Aorta (tissue), 5 donors: ENCODE measurements at regions of chr2 and their contacts with region 1.

Region 1: GRCh38 chr2:241102239-241102803 is at the start of gene MTERF4:
- DNase-seq: peak; percentile 90 to 95
- ATAC-seq: peak; percentile 96
- H3K4me3 ChIP-seq: peak within 1 kb of the TSS; percentile 54 to 99
- H3K27ac ChIP-seq: peak within 1 kb of the TSS; percentile 1 to 94
- H3K4me1 ChIP-seq: peaks cover 0 to 3% of the 10 kb centered on the region in 2 donors
- H3K27me3 ChIP-seq: no peaks in the 10 kb centered on the region
- total RNA-seq, gene MTERF4: 24.4 to 36.4 TPM

Region 2: DNA sequence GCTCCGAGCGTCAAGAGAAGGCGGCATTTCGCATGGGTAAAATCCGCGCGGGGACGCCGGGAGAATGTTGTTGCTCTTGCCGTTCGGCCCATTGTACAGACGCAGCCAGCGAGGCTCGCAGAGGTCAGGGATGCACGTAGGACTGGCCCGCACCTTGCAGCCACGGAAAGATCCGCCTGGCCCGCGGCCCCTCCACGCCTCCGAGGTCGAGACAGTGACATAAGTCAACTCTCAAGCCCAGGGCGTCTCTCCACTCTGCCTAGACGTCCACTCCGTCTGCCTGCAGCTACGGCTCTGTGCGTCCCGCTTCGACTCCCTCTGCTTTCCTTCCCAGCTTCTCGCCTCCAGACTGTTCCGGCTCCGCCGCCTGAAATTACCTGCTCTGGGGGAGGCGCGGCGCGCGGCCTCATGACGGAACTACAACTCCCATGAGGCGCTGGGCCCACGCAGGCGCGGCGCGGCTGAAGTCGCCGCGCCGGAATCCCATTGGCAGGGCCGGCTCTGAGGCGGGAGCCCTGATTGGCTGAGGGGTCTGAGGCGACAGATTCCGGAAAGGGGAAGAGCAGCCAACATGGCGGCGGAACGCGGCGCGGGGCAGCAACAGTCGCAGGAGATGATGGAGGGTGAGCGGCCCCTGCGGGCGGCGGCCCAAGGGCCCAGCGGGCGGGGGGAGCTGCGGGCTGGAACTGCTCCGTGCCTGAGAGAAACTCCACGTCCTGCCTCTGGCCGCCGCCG is 47.8 kb after region 1 on chr2 and contains the start of gene PPP1R7:
- intact Hi-C with region 1: loop called in 1 of 2 experiments (anchors 5 kb)
- DNase-seq: peak; percentile 97 to 98
- ATAC-seq: peak; percentile 98
- H3K4me3 ChIP-seq: peak within 1 kb of the TSS; percentile 61 to 86
- H3K27ac ChIP-seq: peak within 1 kb of the TSS in 1 of 2 donors; percentile 58
- H3K4me1 ChIP-seq: no peaks in the 10 kb centered on the region
- H3K27me3 ChIP-seq: no peaks in the 10 kb centered on the region
- total RNA-seq, gene PPP1R7: 41.1 to 46.1 TPM

Region 3: DNA sequence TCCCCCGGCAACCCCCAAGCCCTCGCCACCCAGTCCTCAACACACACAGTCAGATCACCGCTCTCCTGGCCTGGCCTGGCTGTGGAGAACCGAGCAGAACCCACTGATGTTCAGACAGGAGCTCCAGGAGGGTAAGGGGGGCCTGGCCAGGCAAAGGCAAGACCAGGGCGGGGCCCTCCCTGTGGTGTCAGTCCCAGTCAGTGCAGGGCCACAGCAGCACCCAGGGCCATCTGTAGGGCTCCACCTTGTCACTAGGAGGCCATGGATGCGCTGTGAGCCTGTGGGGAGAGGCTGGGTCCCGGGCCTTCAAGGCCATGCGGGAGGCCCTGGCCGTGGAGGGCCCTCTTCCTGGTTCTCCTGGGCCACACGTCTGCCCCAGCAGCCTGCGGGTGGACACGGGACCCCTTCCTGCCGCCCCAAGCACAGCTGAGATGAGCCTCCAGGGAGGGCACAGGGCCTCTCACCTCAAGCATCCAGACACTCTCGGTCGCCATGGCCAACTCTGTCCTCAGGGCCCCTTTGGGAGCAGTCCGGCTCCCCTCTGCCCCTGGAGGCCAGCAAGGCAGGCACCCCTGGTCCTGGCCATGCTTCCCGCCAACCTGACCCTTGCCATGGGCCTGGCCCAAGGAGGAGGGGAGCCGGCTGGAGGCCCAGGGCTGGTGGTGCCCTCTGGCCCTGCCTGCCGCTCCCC is 88.1 kb after region 1 on chr2:
- intact Hi-C with region 1: no loop called
- DNase-seq: peak in 1 of 2 donors; percentile 65
- ATAC-seq: no peak
- H3K4me3 ChIP-seq: no peak overlapping the region
- H3K27ac ChIP-seq: no peak overlapping the region
- H3K4me1 ChIP-seq: no peaks in the 10 kb centered on the region
- H3K27me3 ChIP-seq: no peaks in the 10 kb centered on the region